Caco-2 (cell line): ENCODE measurements at regions of chr1 and their contacts with region 1.

Region 1: GRCh38 chr1:232682248-232682647 is 52.3 kb upstream of the SIPA1L2 start:
- DNase-seq: peak; percentile 74 to 89
- H3K4me3 ChIP-seq: no peak overlapping the region
- H3K4me3 Mint-ChIP-seq: no peak overlapping the region
- H3K27ac Mint-ChIP-seq: no peak overlapping the region
- H3K4me1 ChIP-seq: peaks cover 16% of the 10 kb centered on the region
- H3K4me1 Mint-ChIP-seq: peaks cover 7% of the 10 kb centered on the region
- H3K27me3 ChIP-seq: no peaks in the 10 kb centered on the region
- H3K27me3 Mint-ChIP-seq: no peaks in the 10 kb centered on the region
- CTCF ChIP-seq: no peak

Region 2: GRCh38 chr1:232192829-232193783 is 489.1 kb before region 1 on chr1:
- CTCF ChIA-PET with region 1: no interaction called
- POLR2A ChIA-PET with region 1: no interaction called
- intact Hi-C with region 1: no loop called
- DNase-seq: no peak
- H3K4me3 ChIP-seq: no peak overlapping the region
- H3K4me3 Mint-ChIP-seq: no peak overlapping the region
- H3K27ac Mint-ChIP-seq: no peak overlapping the region
- H3K4me1 ChIP-seq: peaks cover 3% of the 10 kb centered on the region
- H3K4me1 Mint-ChIP-seq: peaks cover 10% of the 10 kb centered on the region
- H3K27me3 ChIP-seq: no peaks in the 10 kb centered on the region
- H3K27me3 Mint-ChIP-seq: no peaks in the 10 kb centered on the region
- CTCF ChIP-seq: no peak

Region 3: DNA sequence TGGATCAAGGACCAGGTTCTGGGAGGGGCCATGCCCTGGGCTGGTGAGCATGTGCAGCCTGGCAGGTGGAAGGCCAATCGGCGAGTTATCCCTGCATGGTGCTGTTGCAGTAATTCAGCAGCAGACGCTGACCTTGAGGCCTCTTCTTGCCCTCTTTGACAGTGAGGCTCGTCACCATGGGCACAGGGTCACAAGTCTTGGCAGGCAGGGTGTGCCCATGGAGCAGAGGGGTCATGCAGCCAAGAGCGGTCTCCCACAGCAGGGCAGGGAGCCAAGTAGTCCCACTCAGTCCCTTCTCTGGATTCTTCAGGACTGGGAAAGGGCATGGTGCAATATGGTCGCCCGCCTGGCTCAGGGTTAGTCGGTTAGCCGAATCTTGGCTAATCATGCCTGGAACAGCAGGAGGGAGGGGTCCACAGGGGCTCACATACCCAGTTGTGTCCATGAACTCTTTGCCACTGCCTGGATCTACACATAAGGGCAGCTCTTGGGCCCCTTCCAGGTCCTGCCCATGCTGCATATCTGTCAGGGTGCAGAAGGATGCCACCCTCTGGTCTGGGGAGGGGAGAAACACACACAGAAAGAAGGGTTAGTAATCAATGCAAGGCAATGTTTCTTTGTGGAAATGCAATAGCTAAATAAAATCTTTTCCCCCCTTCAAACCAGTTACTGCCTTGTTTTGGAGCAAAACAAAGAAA is 279.1 kb before region 1 on chr1:
- CTCF ChIA-PET with region 1: no interaction called
- POLR2A ChIA-PET with region 1: no interaction called
- intact Hi-C with region 1: no loop called
- DNase-seq: no peak
- H3K4me3 ChIP-seq: no peak overlapping the region
- H3K4me3 Mint-ChIP-seq: no peak overlapping the region
- H3K27ac Mint-ChIP-seq: no peak overlapping the region
- H3K4me1 ChIP-seq: no peaks in the 10 kb centered on the region
- H3K4me1 Mint-ChIP-seq: no peaks in the 10 kb centered on the region
- H3K27me3 ChIP-seq: no peaks in the 10 kb centered on the region
- H3K27me3 Mint-ChIP-seq: no peaks in the 10 kb centered on the region
- CTCF ChIP-seq: no peak

Region 4: DNA sequence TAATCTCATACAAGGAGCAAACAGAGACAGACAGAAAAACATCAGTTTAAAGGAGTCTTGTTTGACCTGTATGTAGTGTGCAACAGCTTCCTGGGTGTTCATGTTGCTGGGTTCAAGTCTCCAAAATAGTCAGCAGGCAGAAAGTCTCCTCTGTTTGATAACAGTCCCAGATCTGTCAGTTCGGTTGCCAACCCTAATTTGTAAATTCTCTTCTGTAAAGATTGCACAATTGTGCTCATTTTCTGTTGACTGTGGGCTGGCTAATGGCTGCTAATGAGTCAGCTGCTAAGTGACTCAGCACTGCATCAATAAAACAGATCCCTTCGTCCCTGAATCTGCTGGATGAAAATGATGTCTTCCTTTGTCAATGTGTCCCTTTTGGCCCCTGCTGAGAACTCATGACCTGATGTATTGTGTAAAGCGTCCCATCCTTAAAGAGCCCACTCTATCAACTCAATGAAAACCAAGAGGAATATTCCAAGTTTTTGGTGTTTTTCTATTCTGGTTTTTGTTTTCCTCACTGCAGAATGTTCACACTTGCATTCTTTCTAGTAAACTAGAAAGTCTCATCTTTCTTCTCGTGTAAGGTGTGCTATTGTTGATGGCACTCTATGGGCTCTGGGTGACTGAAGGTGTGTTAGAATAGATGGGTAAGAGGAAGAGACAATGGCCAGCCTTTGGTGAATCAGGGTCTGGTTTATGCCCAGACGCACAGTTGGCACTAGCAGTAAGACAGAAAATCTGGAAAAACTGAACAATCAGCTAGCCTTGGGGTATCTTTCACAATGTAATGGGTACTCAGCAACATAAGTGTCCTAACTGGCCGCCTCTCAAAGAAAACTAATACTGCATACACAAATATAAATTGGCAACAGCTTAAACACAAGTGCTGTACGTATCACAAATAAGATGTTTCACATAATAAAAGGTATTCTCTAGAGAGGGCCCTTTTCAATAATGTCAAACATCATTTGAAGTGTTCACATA is 22.7 kb after region 1 on chr1:
- CTCF ChIA-PET with region 1: no interaction called
- POLR2A ChIA-PET with region 1: no interaction called
- intact Hi-C with region 1: loop called (anchors 2 kb)
- DNase-seq: peak; percentile 9 to 37
- H3K4me3 ChIP-seq: no peak overlapping the region
- H3K4me3 Mint-ChIP-seq: no peak overlapping the region
- H3K27ac Mint-ChIP-seq: peak overlapping the region; percentile 45
- H3K4me1 ChIP-seq: peaks cover 9% of the 10 kb centered on the region
- H3K4me1 Mint-ChIP-seq: peaks cover 23% of the 10 kb centered on the region
- H3K27me3 ChIP-seq: no peaks in the 10 kb centered on the region
- H3K27me3 Mint-ChIP-seq: no peaks in the 10 kb centered on the region
- CTCF ChIP-seq: no peak